Heart right ventricle (tissue), 16 donors: ENCODE measurements at regions of chr20 and their contacts with region 1.

Region 1: GRCh38 chr20:40689943-40690835 is 1.2 kb upstream of the MAFB start:
- DNase-seq: peak; percentile 90 to 92
- ATAC-seq: peak; percentile 56 to 85 (median 76)
- H3K4me3 ChIP-seq: peak overlapping the region; percentile 23 to 74 (median 68)
- H3K27ac ChIP-seq: peak overlapping the region; percentile 86 to 99 (median 96)
- H3K4me1 ChIP-seq: peaks cover 4 to 51% (median 33%) of the 10 kb centered on the region in 9 donors
- H3K27me3 ChIP-seq: peaks cover 18 to 99% (median 55%) of the 10 kb centered on the region in 7 donors
- CTCF ChIP-seq: peak; percentile 74 to 97 (median 95)

Region 2: DNA sequence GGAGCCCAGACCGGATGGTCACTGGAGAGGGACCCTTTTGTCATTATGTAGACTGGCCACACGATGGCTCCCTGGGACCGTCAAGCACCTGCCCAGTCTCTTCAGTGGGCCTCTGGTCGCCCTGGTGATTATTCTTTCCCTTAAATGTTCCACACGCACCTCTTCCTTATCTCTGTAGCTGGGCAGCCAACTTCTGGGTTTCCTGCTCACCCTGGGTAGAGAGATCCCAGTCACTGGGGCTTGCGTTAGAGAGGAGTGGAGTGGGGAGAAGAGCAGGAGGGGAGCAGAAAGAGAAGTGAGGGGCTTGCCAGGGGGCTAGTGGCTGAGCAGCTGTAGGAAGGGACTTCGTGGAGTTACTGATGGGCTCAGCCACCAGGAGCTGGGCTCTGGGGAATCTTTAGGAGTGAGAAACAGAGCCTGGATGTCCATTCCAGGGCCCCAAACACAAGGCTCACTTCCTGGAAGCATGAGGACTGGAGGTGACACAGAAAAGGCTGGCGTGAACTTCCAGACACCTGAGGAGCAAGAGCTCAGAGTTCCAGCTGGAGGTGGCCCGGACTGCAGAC is 1577.9 kb before region 1 on chr20:
- intact Hi-C with region 1: loop called in 1 of 10 experiments (anchors 10 kb)
- DNase-seq: peak; percentile 24 to 40
- ATAC-seq: peak; percentile 64 to 90 (median 88)
- H3K4me3 ChIP-seq: no peak overlapping the region
- H3K27ac ChIP-seq: no peak overlapping the region
- H3K4me1 ChIP-seq: peaks cover 0 to 9% (median 0%) of the 10 kb centered on the region in 9 donors
- H3K27me3 ChIP-seq: peaks cover 0 to 53% (median 28%) of the 10 kb centered on the region in 7 donors
- CTCF ChIP-seq: peak; percentile 31 to 74 (median 64)

Region 3: DNA sequence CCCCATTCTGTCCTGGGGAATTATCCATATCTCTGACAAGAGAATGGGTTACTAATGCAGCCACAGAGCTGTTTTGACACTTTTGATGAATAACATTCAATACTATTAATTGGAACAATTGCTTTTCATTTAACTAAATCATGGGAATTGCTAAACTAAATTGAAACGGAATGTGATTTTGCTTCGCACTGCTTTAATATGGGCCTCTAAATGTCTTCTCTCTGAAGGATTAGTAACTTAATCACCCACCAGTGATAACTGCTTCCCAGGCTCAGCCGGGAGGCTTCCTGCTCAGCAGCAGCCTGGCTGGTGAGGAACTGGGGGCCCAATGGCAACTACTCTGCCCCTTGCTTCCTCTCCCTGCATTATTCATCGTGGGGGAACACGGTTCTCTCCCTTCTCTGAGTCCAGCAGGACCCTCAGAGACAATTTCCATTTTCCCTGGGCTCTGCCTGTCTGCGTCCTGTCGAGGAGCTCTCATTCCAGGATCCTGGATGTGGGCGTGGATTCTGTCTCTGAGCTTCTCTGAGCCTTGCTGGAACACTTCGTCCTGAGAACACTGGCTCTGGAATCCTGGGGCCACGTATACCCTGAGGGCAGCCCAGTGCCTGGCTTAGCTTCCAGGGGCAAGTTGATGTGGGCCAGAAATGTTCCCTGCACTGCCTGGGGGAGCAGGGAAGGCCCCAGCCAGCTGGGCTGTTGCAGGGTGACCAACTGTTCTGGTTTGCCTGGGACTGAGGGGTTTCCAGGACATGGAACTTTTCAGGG is 1419.2 kb before region 1 on chr20:
- intact Hi-C with region 1: loop called in 3 of 10 experiments (anchors 10 kb)
- DNase-seq: peak in 1 of 2 donors; percentile 18
- ATAC-seq: peak in 5 of 8 donors; percentile 17 to 77 (median 37)
- H3K4me3 ChIP-seq: no peak overlapping the region
- H3K27ac ChIP-seq: peak overlapping the region in 4 of 10 donors; percentile 10 to 64 (median 46)
- H3K4me1 ChIP-seq: peaks cover 0 to 36% (median 0%) of the 10 kb centered on the region in 9 donors
- H3K27me3 ChIP-seq: peaks cover 0 to 10% (median 0%) of the 10 kb centered on the region in 7 donors
- CTCF ChIP-seq: no peak

Region 4: DNA sequence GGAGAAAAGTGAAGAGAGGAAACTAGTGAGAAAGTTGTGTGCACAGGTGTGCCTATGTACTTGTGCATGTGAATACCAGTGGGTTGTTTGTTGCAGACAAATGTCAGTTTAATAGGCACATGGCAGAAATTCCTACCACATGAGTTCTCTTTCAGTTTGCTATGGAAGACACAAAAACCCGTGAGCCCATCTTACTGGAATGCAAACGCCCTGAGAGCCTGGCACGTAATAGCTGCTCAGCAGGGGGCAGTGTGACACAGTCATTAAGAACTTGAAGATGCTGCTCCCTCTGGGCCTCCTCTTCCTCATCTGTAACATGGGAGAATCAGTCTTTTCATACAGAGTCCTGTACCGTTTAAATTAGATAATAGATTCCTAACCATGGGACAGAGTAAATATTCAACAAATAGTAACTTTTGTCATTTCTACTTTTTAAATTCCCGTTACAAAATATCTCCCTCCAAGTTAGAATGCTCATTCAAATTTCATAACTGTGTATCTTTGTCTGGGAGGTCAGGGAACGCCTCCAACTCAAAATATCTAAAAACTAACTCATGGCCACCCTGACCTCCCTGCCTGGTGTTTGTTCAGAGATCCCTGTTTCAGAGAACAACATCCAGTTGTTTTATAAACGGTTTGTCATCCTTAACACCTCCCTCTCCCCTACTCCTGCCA is 804.1 kb before region 1 on chr20:
- intact Hi-C with region 1: loop called in 9 of 10 experiments (anchors 1 to 10 kb)
- DNase-seq: peak; percentile 51 to 69
- ATAC-seq: peak; percentile 61 to 88 (median 82)
- H3K4me3 ChIP-seq: no peak overlapping the region
- H3K27ac ChIP-seq: peak overlapping the region in 2 of 10 donors; percentile 10 to 50
- H3K4me1 ChIP-seq: peaks cover 0 to 11% (median 0%) of the 10 kb centered on the region in 9 donors
- H3K27me3 ChIP-seq: no peaks in the 10 kb centered on the region
- CTCF ChIP-seq: peak; percentile 24 to 71 (median 65)

Region 5: DNA sequence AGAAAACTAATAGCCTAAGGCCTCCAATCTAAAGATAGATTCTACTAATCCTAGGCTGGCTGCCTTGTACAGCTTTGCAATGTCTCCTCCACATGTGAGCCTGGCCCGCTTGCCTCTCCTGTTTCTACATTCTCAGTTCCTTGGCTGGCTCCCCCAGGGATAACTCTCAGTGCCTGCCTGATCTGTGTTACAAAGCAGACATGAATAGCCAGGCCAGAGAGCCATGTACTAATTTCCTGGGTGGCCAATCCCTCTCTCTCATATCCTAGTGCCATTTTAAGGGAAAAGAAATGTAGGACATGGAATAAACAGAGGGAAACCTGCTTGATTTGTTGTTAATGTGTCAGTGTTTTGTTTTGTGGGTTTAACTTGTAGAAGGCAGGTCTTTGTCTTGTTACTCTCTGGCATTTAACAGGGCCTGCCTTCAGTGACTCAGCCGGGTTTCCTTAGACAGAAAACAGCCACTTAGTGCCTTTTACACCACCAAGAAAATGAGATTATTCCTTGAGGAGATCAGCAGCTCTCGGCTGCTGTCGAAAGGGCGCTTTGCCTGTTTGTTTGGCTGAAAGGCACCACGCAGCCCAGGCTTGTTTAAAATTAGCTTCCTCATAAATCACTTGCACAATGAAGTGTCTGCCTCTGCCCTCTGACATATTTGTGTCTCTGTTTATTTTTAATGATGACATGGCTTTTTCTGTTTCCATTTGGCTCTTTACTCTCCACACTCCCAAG is 703.9 kb before region 1 on chr20:
- intact Hi-C with region 1: loop called in 1 of 10 experiments (anchors 10 kb)
- DNase-seq: peak; percentile 50 to 55
- ATAC-seq: peak; percentile 89 to 97 (median 94)
- H3K4me3 ChIP-seq: no peak overlapping the region
- H3K27ac ChIP-seq: peak overlapping the region; percentile 63 to 96 (median 88)
- H3K4me1 ChIP-seq: peaks cover 0 to 32% (median 13%) of the 10 kb centered on the region in 9 donors
- H3K27me3 ChIP-seq: no peaks in the 10 kb centered on the region
- CTCF ChIP-seq: no peak

Region 6: DNA sequence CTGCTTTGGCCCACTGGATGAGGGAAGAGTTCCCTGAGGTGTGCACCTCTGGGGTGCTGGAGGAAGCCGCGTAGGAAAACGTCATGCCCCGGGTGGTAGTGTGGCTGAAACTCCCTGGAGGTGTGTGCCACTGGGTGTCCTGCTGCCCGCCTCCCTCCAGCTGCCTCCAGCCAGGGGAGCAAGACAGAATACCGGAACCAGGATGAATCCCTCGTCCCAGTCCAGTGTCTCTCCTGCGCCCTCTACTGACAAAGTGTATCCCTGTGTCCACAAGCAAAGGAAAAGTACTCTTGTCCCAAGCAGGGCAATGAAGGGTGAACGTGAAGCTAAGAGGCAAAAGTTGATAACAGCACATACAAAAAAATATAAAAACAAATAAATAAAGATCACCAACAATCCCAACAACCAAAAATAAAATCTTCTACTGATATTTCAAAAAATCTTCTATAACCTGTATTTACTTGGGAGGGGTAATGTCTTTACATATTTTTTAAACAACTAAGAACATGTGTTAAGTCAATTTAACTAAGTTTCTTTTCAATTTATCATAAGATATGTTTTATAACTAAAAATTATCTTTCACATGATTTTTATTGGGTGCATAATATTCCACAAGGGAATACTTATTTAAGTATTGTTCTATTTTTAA is 438.8 kb before region 1 on chr20:
- intact Hi-C with region 1: loop called in 1 of 10 experiments (anchors 5 kb)
- DNase-seq: no peak
- ATAC-seq: no peak
- H3K4me3 ChIP-seq: no peak overlapping the region
- H3K27ac ChIP-seq: no peak overlapping the region
- H3K4me1 ChIP-seq: peaks cover 0 to 6% (median 0%) of the 10 kb centered on the region in 9 donors
- H3K27me3 ChIP-seq: peaks cover 0 to 6% (median 0%) of the 10 kb centered on the region in 7 donors
- CTCF ChIP-seq: peak in 7 of 9 donors; percentile 25 to 55 (median 39)

Region 7: DNA sequence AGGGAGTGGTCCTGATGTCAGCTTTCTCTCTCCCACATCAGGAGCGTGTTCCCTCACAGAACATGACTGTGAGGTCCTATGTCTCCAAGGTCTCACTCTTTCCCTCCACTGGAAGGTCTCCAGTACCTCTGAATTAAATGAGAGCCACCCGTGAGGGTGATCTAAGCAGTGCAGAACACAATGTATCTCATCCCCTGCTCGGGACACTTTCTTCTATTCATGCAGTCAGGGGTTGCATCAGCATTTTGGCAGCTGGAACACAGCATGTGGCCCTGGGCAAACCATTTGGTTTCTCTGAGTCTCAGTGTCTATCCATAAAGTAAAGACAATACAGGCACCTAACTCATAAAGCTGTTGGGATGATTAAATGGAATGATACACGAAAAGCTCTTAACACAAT is 35.3 kb before region 1 on chr20:
- intact Hi-C with region 1: loop called in 1 of 10 experiments (anchors 2 kb)
- DNase-seq: no peak
- ATAC-seq: peak in 5 of 8 donors; percentile 33 to 93 (median 81)
- H3K4me3 ChIP-seq: no peak overlapping the region
- H3K27ac ChIP-seq: no peak overlapping the region
- H3K4me1 ChIP-seq: no peaks in the 10 kb centered on the region
- H3K27me3 ChIP-seq: peaks cover 0 to 3% (median 0%) of the 10 kb centered on the region in 7 donors
- CTCF ChIP-seq: no peak